ENCODE measurements at regions of chr14 and their contacts with region 1.

Region 1: DNA sequence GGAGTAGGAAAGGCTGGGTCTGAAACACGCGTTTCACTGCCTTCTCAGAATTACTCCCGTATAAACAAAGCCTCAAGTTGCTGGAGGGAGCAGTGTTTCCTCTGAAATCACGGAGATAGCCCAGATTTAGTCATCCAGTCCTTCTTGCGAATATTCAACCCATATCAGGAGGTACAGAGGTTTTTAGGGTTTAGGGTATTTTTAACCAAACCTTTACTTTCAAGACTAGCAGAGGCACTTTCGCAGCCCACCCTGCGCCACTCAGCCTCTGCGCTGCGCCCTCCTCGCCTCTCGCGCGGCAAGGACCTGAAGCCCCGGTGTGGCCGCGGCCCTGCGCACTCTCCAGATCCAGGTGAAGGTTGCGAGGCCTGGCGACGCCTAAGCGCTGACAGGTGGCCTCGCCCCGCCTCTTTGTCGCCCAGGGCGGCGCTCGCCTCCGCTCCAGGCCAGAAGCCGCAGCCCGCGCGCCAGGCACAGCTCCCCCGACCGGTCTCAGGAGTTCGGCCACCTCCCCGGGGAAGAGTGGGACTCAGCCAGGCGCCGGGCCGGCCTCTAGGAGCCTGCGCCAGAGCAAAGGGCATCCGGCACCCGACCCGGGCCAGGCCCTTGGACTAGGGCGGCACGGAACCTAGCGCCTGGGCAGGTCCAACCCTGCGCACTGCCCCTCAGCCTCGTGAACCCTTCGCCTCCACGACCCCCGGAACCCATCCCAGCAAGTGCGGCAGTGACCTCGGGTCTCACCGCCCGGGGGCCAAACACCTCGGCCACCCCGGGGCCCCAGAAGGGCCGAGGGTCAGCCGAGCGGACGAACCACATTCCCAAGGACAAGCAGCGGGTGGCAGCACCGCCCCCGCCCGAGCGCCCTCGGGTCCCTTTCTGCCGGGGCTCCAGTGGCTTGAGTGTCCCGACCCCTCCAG is 1.8 kb upstream of the SAMD4A start:
- DNase-seq: peak; percentile 87
- ATAC-seq: peak; percentile 83
- H3K4me3 ChIP-seq: peak overlapping the region; percentile 79
- H3K27ac ChIP-seq: peak overlapping the region; percentile 99
- H3K4me1 ChIP-seq: peaks cover 32% of the 10 kb centered on the region
- H3K27me3 ChIP-seq: no peaks in the 10 kb centered on the region
- CTCF ChIP-seq: peak; percentile 38

Region 2: DNA sequence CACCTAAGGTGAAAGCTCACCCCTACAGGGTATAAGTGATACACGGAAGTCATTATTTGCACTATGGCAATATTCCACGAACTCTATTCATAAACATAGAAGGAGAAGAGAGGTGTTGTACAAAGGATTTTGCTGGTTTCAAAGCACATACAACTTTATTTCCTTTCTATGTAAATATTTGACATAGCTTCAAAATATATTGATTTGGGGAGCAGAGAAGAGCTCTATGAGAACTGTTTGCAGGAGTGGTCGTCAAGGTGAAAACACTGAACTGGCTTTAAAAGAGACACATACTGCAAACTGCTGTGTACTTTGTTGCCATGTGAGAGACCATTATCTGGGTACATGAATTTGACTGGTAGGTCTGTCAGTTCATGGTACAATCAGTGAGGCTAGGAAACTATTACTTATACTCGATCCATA is 140.6 kb before region 1 on chr14:
- intact Hi-C with region 1: no loop called
- DNase-seq: no peak
- ATAC-seq: peak in 1 of 2 donors; percentile 11
- H3K4me3 ChIP-seq: no peak overlapping the region
- H3K27ac ChIP-seq: no peak overlapping the region
- H3K4me1 ChIP-seq: no peaks in the 10 kb centered on the region
- H3K27me3 ChIP-seq: no peaks in the 10 kb centered on the region
- CTCF ChIP-seq: no peak

Region 3: DNA sequence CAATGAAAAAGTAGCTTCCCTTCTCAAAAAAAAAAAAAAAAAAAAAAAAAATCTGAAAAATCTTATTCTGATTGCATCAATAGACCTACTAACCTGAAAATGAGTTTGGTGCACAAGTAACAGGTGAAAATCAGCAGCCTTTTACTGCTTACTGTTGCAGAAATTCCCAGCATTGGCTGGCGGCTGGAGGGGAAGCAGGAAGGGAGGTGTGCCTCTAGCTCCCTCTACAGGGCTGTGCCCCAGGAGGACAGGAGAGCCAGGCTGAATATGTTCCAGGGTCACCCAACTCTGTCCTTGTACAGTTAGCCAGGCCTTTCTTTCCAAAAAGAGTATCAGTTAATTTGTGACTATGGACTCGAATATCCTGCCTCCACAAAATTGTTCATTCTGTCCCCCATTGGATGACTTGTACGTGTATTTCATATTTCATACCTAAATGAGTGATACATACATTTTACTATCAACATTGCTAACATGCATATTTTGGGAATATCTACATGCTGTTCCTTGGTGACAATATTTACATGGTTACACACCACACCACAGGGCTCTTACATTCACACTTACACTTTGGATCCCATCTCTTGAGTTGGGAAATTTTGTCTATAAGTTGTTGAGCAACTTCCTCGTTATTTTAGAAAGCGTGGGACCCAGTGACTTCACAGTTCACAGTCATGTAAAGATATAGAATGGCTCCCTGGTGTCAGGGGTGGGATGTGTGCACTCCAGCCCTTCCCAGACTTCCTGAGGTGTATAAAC is 126.6 kb after region 1 on chr14:
- intact Hi-C with region 1: loop called (anchors 5 kb)
- DNase-seq: peak; percentile 79
- ATAC-seq: peak; percentile 92 to 93
- H3K4me3 ChIP-seq: no peak overlapping the region
- H3K27ac ChIP-seq: peak overlapping the region; percentile 19
- H3K4me1 ChIP-seq: peaks cover 28% of the 10 kb centered on the region
- H3K27me3 ChIP-seq: no peaks in the 10 kb centered on the region
- CTCF ChIP-seq: peak; percentile 90

Region 4: GRCh38 chr14:54722781-54723432 is 157.8 kb after region 1 on chr14:
- intact Hi-C with region 1: no loop called
- DNase-seq: no peak
- ATAC-seq: peak; percentile 59 to 70
- H3K4me3 ChIP-seq: no peak overlapping the region
- H3K27ac ChIP-seq: no peak overlapping the region
- H3K4me1 ChIP-seq: peaks cover 10% of the 10 kb centered on the region
- H3K27me3 ChIP-seq: no peaks in the 10 kb centered on the region
- CTCF ChIP-seq: peak; percentile 47

Measured in lower lobe of right lung (tissue), 2 donors.